A549 (cell line): ENCODE measurements at regions of chr7 and their contacts with region 1.

Region 1: GRCh38 chr7:76262683-76263402 is 39.6 kb upstream of the HSPB1 start:
- DNase-seq: peak; percentile 66 to 85
- ATAC-seq: peak; percentile 79 to 88
- H3K4me3 ChIP-seq: no peak overlapping the region
- H3K27ac ChIP-seq: no peak overlapping the region
- H3K4me1 ChIP-seq: peaks cover 7% of the 10 kb centered on the region; the same call in 2 of the 3 replicates
- CTCF ChIP-seq: peak; percentile 81
- EP300 ChIP-seq: no peak
- POLR2A ChIP-seq: no peak
- RAD21 ChIP-seq: peak; percentile 83 to 92

Region 2: DNA sequence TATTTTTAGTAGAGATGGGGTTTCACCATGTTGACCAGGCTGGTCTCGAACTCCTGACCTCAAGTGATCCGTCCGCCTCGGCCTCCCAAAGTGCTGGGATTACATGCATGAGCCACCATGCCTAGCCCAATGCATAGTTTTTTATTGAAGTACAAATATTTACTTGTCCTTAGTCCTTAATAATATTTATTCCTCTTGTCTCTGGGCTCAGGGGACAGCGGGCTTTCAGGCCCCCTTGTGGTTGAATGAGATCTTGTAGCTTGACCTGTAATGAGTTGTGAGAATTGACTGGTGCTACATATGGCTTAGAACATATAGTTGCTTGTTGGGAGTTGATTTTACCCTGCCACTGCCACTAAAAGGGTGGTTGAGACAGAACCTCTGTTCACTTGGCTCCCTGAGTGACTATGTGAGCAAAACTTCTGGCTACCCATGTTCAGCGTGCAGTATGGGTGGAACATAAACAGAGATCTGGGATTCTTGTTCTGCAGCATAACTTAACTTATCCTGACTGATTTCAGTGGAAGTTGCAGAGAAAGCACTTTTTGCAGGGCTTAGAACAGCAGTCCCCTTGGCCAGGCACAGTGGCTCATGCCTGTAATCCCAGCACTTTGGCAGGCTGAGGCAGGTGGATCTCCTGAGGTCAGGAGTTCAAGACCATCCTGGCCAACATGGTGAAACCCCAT is 505.7 kb before region 1 on chr7:
- CTCF ChIA-PET with region 1: no interaction called
- POLR2A ChIA-PET with region 1: no interaction called
- DNase-seq: peak; percentile 53 to 60
- ATAC-seq: peak in 1 of 2 experiments; percentile 86; a peak in 3 of 6 replicates
- H3K4me3 ChIP-seq: no peak overlapping the region
- H3K27ac ChIP-seq: no peak overlapping the region
- H3K4me1 ChIP-seq: no peaks in the 10 kb centered on the region
- CTCF ChIP-seq: peak; percentile 24
- EP300 ChIP-seq: no peak
- POLR2A ChIP-seq: no peak
- RAD21 ChIP-seq: peak; percentile 23 to 59; a peak in 3 of 5 replicates

Region 3: GRCh38 chr7:76201730-76202665 is 60.8 kb before region 1 on chr7 and contains the start of gene SRRM3:
- CTCF ChIA-PET with region 1: interaction called, 14 read pairs
- POLR2A ChIA-PET with region 1: no interaction called
- DNase-seq: peak in 1 of 2 experiments; percentile 84
- ATAC-seq: peak; percentile 83 to 89
- H3K4me3 ChIP-seq: peak within 1 kb of the TSS; percentile 42
- H3K27ac ChIP-seq: peak within 1 kb of the TSS; percentile 42 to 80; a peak in 4 of 6 replicates
- H3K4me1 ChIP-seq: 0 out of 3 replicates have a peak, but pooled peaks cover 3% of the 10 kb centered on the region
- CTCF ChIP-seq: peak; percentile 73
- EP300 ChIP-seq: no peak
- POLR2A ChIP-seq: no peak
- RAD21 ChIP-seq: peak in 1 of 2 experiments; percentile 41; a peak in 2 of 5 replicates
- polyA plus RNA-seq, gene SRRM3: 2.4 and 3.0 TPM in 2 replicates

Region 4: GRCh38 chr7:76244781-76245391 is 18.0 kb before region 1 on chr7:
- CTCF ChIA-PET with region 1: interaction called, 33 read pairs
- POLR2A ChIA-PET with region 1: no interaction called
- DNase-seq: no peak
- ATAC-seq: no peak
- H3K4me3 ChIP-seq: no peak overlapping the region
- H3K27ac ChIP-seq: no peak overlapping the region
- H3K4me1 ChIP-seq: no peaks in the 10 kb centered on the region
- CTCF ChIP-seq: no peak
- EP300 ChIP-seq: no peak
- POLR2A ChIP-seq: no peak
- RAD21 ChIP-seq: no peak

Region 5: DNA sequence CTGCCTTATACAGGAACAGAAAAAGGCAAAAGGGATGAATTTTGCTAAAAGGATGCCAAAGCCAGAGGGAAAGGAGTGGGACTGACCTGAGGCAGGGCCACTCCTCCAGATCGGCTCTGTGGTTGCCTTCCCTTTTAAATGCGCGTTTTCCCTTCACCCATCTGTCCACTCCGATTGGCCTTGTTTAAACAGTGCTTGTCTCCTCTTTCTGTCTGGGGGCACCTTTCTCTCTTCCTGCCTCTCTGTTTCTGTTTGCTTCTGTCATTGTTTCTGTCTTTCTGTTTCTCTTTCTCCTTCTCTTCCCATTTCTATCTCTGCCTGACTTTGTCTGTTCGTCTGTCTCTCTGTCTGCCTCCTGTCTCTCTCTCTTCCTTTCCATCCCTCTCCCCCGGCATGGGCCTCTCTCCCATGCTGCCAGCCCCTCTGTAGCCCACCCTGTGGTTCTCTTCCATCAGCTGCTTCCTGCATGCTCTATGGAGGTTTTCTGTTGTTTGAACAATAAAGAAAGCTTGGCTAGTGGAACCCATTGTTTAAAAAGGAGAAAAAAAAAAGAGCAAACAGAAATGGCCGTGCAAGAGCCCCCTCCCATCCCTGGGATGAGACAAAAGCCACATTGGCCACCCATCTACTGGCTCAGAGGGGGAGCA is 10.1 kb after region 1 on chr7:
- CTCF ChIA-PET with region 1: interaction called, 19 read pairs
- POLR2A ChIA-PET with region 1: interaction called, 3 read pairs
- DNase-seq: no peak
- ATAC-seq: peak in 1 of 2 experiments; percentile 21; a peak in 1 of 6 replicates
- H3K4me3 ChIP-seq: no peak overlapping the region
- H3K27ac ChIP-seq: peak overlapping the region in 1 of 2 experiments; percentile 18; a peak in 1 of 6 replicates
- H3K4me1 ChIP-seq: peaks cover 7% of the 10 kb centered on the region; the same call in 2 of the 3 replicates
- CTCF ChIP-seq: no peak
- EP300 ChIP-seq: no peak
- POLR2A ChIP-seq: no peak
- RAD21 ChIP-seq: no peak

Region 6: GRCh38 chr7:76282344-76283253 is 19.8 kb after region 1 on chr7:
- CTCF ChIA-PET with region 1: interaction called, 25 read pairs
- POLR2A ChIA-PET with region 1: no interaction called
- DNase-seq: no peak
- ATAC-seq: peak; percentile 47 to 65
- H3K4me3 ChIP-seq: peak overlapping the region; percentile 78
- H3K27ac ChIP-seq: peak overlapping the region; percentile 84
- H3K4me1 ChIP-seq: peaks cover 19% of the 10 kb centered on the region
- CTCF ChIP-seq: no peak
- EP300 ChIP-seq: no peak
- POLR2A ChIP-seq: no peak
- RAD21 ChIP-seq: no peak

Region 7: DNA sequence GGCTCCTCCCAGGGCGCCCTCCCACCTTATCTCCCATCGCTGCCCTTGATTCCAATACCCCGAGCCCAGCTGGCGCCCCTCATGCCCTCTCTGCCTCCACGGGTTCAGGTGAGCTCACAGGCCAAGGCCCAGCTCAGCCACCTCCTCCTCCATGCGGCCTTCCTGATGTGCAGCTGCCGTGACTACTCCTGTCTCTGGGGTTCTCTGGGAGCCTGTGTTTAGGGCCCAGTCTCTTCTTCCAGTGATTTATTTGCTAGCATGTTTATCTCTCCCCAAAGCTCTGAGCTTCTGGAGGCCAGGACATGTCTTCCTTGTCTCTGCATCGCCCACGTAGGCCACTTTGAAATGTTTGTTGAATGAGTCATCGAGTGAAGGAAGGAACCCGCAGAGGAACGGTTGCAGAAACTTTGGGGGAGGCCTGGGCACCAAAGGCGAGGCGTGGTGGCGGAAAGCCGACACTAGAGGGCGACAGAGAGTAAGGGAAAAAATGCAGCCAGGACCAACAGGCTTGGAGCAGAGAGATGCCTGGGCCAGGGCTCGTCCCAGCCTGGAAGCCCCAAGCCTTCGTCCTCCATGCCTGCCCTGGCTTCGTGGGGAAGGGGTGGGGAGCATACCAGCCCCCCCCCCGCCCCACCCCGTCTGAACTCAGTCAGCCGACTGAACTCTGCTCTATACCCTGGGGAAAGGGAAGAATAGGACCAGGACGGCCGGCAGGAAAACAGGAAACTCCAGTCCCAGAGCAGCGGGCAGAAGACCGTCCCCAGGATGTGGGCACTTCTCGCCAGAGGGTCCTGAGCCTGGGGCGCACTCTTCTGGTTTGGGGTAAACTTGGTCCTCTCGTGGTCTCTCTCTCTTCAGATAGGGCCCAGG is 28.7 kb after region 1 on chr7:
- CTCF ChIA-PET with region 1: interaction called, 17 read pairs
- POLR2A ChIA-PET with region 1: interaction called, 3 read pairs
- DNase-seq: peak; percentile 91 to 96
- ATAC-seq: peak; percentile 78 to 84
- H3K4me3 ChIP-seq: peak overlapping the region; percentile 37
- H3K27ac ChIP-seq: peak overlapping the region; percentile 92 to 97
- H3K4me1 ChIP-seq: peaks cover 49% of the 10 kb centered on the region
- CTCF ChIP-seq: peak; percentile 96
- EP300 ChIP-seq: no peak
- POLR2A ChIP-seq: peak; percentile 48
- RAD21 ChIP-seq: peak; percentile 96 to 98

Region 8: DNA sequence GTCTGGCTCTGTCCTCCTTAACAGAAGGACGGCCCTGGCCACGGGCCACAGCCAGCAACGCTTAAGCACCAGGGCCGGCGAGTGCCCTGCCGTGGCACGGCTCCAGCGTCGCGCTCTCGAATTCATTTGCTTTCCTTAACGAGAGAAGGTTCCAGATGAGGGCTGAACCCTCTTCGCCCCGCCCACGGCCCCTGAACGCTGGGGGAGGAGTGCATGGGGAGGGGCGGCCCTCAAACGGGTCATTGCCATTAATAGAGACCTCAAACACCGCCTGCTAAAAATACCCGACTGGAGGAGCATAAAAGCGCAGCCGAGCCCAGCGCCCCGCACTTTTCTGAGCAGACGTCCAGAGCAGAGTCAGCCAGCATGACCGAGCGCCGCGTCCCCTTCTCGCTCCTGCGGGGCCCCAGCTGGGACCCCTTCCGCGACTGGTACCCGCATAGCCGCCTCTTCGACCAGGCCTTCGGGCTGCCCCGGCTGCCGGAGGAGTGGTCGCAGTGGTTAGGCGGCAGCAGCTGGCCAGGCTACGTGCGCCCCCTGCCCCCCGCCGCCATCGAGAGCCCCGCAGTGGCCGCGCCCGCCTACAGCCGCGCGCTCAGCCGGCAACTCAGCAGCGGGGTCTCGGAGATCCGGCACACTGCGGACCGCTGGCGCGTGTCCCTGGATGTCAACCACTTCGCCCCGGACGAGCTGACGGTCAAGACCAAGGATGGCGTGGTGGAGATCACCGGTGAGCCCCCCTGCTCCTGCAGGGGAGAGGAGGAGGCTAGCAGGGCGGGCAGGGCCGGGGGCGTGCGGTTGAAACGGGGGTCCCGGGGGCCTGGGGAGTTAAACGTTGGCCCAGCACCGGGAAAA is 39.7 kb after region 1 on chr7 and contains the start of gene HSPB1:
- CTCF ChIA-PET with region 1: interaction called, 12 read pairs
- POLR2A ChIA-PET with region 1: no interaction called
- DNase-seq: peak; percentile 73 to 92
- ATAC-seq: peak; percentile 52 to 60
- H3K4me3 ChIP-seq: peak within 1 kb of the TSS; percentile 91
- H3K27ac ChIP-seq: peak within 1 kb of the TSS; percentile 96
- H3K4me1 ChIP-seq: peaks cover 60% of the 10 kb centered on the region
- CTCF ChIP-seq: no peak
- EP300 ChIP-seq: no peak
- POLR2A ChIP-seq: peak; percentile 97
- RAD21 ChIP-seq: no peak
- polyA plus RNA-seq, gene HSPB1: 185 and 209 TPM in 2 replicates

Region 9: DNA sequence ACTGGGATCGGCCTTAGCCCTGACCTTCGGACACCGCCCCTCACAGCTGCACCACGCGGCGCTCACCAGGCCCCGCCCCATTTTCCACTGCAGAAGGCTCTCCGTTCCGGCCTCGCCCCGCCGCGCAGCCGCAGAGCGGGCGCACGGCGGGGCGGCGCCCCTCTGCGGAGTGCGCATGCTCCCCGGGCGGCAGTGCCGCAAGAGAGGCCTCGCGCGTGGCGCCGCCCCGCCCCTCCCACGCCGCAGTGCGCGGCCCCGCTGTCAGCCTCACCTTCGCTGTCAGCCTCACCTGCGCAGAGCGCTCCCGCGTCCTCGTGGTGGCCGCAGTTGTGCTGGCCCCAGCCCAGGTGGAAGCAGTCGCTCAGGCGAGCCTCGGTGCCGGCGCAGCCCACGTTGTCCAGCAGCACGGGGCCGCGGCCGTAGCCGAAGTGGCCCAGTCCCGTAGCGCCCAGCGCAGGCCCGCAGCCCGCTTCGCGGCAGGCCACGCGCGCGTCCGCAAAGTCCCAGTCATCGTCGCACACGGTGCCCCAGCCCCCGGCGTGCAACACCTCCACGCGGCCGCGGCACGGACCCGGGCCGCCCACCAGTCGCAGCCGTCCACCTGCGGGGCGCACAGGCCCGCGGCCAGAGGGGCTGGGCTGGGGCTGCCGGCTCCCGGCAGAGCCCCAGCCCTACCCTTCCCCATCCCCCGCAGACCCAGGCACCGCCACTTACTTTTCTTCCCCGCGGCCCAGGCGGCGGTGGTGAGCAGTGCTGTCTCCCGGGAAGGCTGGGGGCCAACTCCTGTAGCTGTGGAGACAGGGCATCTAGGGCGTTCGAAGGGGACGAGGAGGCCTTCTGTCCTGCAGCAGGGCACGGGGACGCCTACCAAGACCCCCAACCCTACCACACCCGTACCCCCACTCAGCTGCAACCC is 130.5 kb after region 1 on chr7:
- CTCF ChIA-PET with region 1: no interaction called
- POLR2A ChIA-PET with region 1: no interaction called
- DNase-seq: peak; percentile 91 to 92
- ATAC-seq: peak; percentile 74 to 80
- H3K4me3 ChIP-seq: peak overlapping the region; percentile 53
- H3K27ac ChIP-seq: peak overlapping the region; percentile 88 to 96
- H3K4me1 ChIP-seq: peaks cover 39% of the 10 kb centered on the region
- CTCF ChIP-seq: no peak
- EP300 ChIP-seq: no peak
- POLR2A ChIP-seq: peak; percentile 65
- RAD21 ChIP-seq: no peak

Region 10: DNA sequence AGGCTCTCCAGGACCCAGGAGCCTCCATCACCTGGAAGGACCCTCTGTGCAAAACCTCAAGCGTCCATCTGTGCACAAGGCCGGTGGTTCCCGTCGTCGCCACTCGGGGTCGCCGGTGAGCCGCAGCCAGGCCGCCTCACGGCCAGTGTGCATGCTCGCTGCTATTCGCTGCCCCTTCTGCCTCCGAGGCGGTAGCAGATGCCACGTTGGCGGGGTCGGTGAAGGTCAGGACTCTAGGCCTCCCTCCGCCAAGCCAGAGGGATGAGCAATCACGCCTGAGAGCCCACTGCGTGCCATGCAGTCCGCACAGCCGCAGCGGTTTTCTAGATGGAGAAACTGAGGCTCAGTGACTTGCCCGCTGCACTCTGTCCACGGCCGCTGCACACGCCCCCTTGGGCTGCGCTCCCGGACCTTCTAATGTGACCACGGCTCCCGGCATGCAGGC is 253.2 kb after region 1 on chr7:
- CTCF ChIA-PET with region 1: no interaction called
- POLR2A ChIA-PET with region 1: no interaction called
- DNase-seq: no peak
- ATAC-seq: peak in 1 of 2 experiments; percentile 4; a peak in 1 of 6 replicates
- H3K4me3 ChIP-seq: no peak overlapping the region
- H3K27ac ChIP-seq: peak overlapping the region in 1 of 2 experiments; percentile 75; a peak in 3 of 6 replicates
- H3K4me1 ChIP-seq: peaks cover 21% of the 10 kb centered on the region
- CTCF ChIP-seq: peak; percentile 49
- EP300 ChIP-seq: no peak
- POLR2A ChIP-seq: no peak
- RAD21 ChIP-seq: peak; percentile 64 to 65